ENCODE measurements at regions of chr19 and their contacts with region 1.

Region 1: GRCh38 chr19:41310033-41310758 is at the start of gene CCDC97:
- DNase-seq: peak; percentile 94 to 99
- ATAC-seq: peak; percentile 60 to 78
- H3K4me3 ChIP-seq: peak within 1 kb of the TSS; percentile 57
- H3K27ac ChIP-seq: peak within 1 kb of the TSS; percentile 91 to 92
- H3K4me1 ChIP-seq: peaks cover 24% of the 10 kb centered on the region
- CTCF ChIP-seq: no peak
- EP300 ChIP-seq: peak in 1 of 2 experiments; percentile 58; a peak in 1 of 5 replicates
- POLR2A ChIP-seq: no peak; the same call in none of the 2 replicates
- RAD21 ChIP-seq: peak; percentile 19 to 50
- polyA plus RNA-seq, gene CCDC97: 18.7 and 21.4 TPM in 2 replicates

Region 2: DNA sequence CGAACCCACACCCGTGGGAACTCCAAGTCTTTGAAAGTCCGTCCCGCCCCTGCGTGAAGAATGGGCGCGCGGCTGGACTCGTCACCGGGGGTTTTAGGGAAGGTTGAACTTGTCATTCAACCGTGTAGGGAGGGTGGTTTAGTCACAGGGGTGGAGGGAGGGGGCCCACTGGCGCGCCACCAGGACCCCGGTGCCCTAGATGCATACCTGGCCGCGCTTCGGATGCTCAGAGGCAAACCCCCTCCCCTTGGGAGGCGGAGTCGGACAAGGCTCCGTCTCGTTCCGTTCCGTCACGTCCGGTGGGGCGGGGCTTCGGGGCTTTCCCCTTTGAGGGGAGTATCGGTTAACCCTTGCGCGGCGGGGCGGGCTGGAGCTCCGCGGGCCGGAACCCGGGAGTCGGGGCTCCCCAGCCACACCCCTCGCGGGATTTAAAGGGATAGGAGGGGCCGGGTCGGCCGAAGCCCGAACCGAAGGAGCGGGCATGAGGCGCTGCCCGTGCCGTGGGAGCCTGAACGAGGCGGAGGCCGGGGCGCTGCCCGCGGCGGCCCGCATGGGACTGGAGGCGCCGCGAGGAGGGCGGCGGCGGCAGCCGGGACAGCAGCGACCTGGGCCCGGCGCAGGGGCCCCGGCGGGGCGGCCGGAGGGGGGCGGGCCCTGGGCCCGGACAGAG is 593.4 kb before region 1 on chr19 and contains the starts of genes COQ8B and ITPKC:
- CTCF ChIA-PET with region 1: no interaction called
- POLR2A ChIA-PET with region 1: no interaction called
- DNase-seq: peak; percentile 99 to 100
- ATAC-seq: peak; percentile 45 to 61
- H3K4me3 ChIP-seq: peak within 1 kb of the TSS; percentile 64
- H3K27ac ChIP-seq: peak within 1 kb of the TSS; percentile 88 to 93
- H3K4me1 ChIP-seq: peaks cover 34% of the 10 kb centered on the region
- CTCF ChIP-seq: no peak
- EP300 ChIP-seq: no peak; a peak in 1 of 5 replicates
- POLR2A ChIP-seq: peak; percentile 60
- RAD21 ChIP-seq: peak in 1 of 2 experiments; percentile 14; a peak in 2 of 5 replicates
- polyA plus RNA-seq, gene COQ8B: 43.9 and 47.2 TPM in 2 replicates
- polyA plus RNA-seq, gene ITPKC: 6.5 and 8.7 TPM in 2 replicates

Region 3: GRCh38 chr19:40974633-40975037 is 335.6 kb before region 1 on chr19:
- CTCF ChIA-PET with region 1: interaction called, 14 read pairs
- POLR2A ChIA-PET with region 1: no interaction called
- DNase-seq: peak; percentile 89 to 90
- ATAC-seq: peak; percentile 81 to 96; a peak in 5 of 6 replicates
- H3K4me3 ChIP-seq: no peak overlapping the region
- H3K27ac ChIP-seq: no peak overlapping the region
- H3K4me1 ChIP-seq: no peaks in the 10 kb centered on the region
- CTCF ChIP-seq: peak; percentile 99
- EP300 ChIP-seq: no peak
- POLR2A ChIP-seq: no peak
- RAD21 ChIP-seq: peak; percentile 85 to 87

Region 4: DNA sequence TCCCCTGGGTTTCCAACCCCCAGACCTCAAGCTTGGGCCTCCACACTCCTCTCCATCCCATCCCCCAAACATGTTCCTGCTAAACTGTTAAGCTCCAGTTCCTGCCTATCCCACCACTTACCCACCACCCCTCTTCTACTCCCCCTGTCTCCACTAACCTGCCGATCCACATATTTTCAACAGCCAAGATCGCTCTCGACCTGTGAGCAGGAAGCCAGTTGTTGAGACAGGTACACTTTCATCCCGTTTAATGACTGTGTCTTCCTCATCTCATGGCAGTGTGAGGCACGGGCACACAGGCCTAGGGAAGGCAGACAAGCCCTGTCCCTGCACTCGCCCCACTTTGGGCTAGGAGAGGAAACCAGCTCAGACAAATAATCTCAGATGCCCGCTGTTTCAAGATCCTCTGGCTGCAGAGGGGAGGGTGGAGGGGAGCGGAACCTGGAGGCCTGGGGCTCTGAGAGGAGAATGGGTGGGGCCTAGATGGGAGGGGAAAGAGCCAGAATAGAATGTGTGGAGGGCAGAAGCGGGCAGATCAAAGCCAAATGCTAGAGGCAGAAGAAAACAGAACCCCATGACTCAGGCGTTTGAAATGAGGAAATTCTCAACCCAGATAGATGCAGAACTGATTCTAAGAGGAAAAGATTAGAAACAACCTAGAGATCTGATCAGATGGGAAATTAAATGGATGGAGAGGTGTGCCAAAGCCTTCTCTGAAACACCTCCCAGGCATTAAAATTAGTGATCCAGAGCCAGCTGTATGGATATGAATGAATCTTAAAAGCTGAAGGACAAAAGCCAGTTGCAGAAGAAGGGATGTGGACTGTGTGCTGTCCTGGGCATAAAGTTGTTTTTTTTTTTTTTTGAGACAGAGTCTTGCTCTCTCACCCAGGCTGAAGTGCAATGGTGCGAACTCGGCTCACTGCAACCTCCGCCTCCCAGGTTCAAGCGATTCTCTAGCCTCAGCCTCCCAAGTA is 134.1 kb before region 1 on chr19:
- CTCF ChIA-PET with region 1: interaction called, 17 read pairs
- POLR2A ChIA-PET with region 1: interaction called, 3 read pairs
- DNase-seq: peak; percentile 98 to 100
- ATAC-seq: peak; percentile 96 to 98
- H3K4me3 ChIP-seq: peak overlapping the region; percentile 40
- H3K27ac ChIP-seq: peak overlapping the region; percentile 85 to 87
- H3K4me1 ChIP-seq: peaks cover 35% of the 10 kb centered on the region
- CTCF ChIP-seq: no peak
- EP300 ChIP-seq: peak in 1 of 2 experiments; percentile 61; a peak in 2 of 5 replicates
- POLR2A ChIP-seq: no peak
- RAD21 ChIP-seq: no peak; a peak in 2 of 5 replicates

Region 5: DNA sequence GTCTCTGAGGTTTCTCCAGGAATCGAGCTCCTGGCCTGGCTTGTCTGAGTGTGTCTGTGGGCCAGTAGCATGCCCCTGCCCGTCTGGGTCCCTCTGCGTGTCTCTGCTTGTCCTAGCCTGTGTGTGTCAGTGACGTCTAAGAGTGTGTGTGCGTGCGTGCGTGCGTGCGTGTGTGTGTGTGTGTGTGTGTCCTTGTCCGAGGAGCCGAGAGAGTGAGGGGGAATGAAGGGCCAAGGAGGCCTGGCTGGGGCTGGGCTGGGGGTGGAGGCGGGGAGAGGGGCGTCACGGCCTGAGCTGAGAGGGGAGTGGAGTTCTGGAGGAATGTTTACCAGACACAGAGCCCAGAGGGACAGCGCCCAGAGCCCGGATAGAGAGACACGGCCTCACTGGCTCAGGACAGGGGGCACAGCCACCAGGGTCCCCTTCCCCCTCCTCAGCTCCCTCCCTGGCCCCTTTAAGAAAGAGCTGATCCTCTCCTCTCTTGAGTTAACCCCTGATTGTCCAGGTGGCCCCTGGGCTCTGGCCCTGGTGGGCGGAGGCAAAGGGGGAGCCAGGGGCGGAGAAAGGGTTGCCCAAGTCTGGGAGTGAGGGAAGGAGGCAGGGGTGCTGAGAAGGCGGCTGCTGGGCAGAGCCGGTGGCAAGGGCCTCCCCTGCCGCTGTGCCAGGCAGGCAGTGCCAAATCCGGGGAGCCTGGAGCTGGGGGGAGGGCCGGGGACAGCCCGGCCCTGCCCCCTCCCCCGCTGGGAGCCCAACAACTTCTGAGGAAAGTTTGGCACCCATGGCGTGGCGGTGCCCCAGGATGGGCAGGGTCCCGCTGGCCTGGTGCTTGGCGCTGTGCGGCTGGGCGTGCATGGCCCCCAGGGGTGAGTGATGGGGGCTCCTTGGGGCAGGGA is 91.3 kb before region 1 on chr19 and contains the start of gene AXL:
- CTCF ChIA-PET with region 1: interaction called, 38 read pairs
- POLR2A ChIA-PET with region 1: interaction called, 3 read pairs
- DNase-seq: peak; percentile 90 to 97
- ATAC-seq: peak; percentile 75 to 80
- H3K4me3 ChIP-seq: peak within 1 kb of the TSS; percentile 61
- H3K27ac ChIP-seq: peak within 1 kb of the TSS; percentile 85 to 91
- H3K4me1 ChIP-seq: peaks cover 53% of the 10 kb centered on the region
- CTCF ChIP-seq: no peak
- EP300 ChIP-seq: peak in 1 of 2 experiments; percentile 20; a peak in 1 of 5 replicates
- POLR2A ChIP-seq: peak; percentile 59
- RAD21 ChIP-seq: no peak; a peak in 1 of 5 replicates
- polyA plus RNA-seq, gene AXL: 60.1 and 60.3 TPM in 2 replicates

Region 6: GRCh38 chr19:41276231-41276630 is 34.0 kb before region 1 on chr19:
- CTCF ChIA-PET with region 1: interaction called, 598 read pairs
- POLR2A ChIA-PET with region 1: no interaction called
- DNase-seq: no peak
- ATAC-seq: no peak; a peak in 1 of 6 replicates
- H3K4me3 ChIP-seq: no peak overlapping the region
- H3K27ac ChIP-seq: no peak overlapping the region
- H3K4me1 ChIP-seq: no peaks in the 10 kb centered on the region
- CTCF ChIP-seq: no peak
- EP300 ChIP-seq: no peak
- POLR2A ChIP-seq: no peak
- RAD21 ChIP-seq: no peak

Region 7: DNA sequence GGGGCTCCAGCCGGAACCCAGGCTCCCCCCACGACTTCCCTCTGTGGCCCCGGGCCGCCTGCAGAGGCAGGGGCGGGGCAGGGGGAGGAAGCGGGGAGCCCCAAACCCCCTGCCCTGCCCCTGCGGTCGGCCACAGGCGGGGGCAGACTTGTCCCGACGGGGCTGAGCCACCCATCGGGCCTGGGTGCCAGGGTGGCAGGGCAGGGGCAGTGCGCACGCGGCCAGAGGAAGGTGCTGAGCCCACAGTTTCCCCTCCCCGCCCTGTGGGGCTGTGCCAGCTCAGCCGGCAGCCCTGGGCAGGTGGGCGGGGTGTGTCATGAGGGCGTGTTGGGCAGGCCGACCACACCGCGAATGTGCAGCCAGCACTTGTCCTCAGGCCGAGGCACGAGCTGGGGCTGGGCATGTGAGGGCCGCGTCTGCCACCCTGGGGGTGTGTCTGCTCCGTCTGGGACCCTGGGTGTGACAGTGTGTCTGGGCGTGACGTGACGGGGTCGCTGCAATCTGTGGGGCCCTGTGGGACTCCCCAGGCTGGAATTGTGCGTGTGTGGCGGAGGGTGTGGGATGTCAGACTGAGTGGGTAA is 17.5 kb after region 1 on chr19:
- CTCF ChIA-PET with region 1: interaction called, 295 read pairs
- POLR2A ChIA-PET with region 1: interaction called, 9 read pairs
- DNase-seq: peak in 1 of 2 experiments; percentile 71
- ATAC-seq: peak; percentile 0 to 9; a peak in 3 of 6 replicates
- H3K4me3 ChIP-seq: no peak overlapping the region
- H3K27ac ChIP-seq: peak overlapping the region; percentile 53 to 91
- H3K4me1 ChIP-seq: peaks cover 64% of the 10 kb centered on the region
- CTCF ChIP-seq: no peak
- EP300 ChIP-seq: no peak
- POLR2A ChIP-seq: no peak
- RAD21 ChIP-seq: no peak

Region 8: GRCh38 chr19:41363753-41364523 is 53.7 kb after region 1 on chr19 and contains the start of gene B9D2:
- CTCF ChIA-PET with region 1: interaction called, 14 read pairs
- POLR2A ChIA-PET with region 1: no interaction called
- DNase-seq: peak; percentile 100
- ATAC-seq: peak; percentile 89 to 93
- H3K4me3 ChIP-seq: peak within 1 kb of the TSS; percentile 66
- H3K27ac ChIP-seq: peak within 1 kb of the TSS; percentile 92 to 94
- H3K4me1 ChIP-seq: peaks cover 49% of the 10 kb centered on the region
- CTCF ChIP-seq: no peak
- EP300 ChIP-seq: no peak
- POLR2A ChIP-seq: peak; percentile 80
- RAD21 ChIP-seq: no peak
- polyA plus RNA-seq, gene B9D2: 17.5 and 19.6 TPM in 2 replicates